H1 (cell line): ENCODE measurements at regions of chr22 and their contacts with region 1.

Region 1: GRCh38 chr22:19820628-19821522 is 33.8 kb downstream of the GNB1L start:
- DNase-seq: peak in 1 of 2 experiments; percentile 50
- H3K4me3 ChIP-seq: no peak overlapping the region
- H3K27ac ChIP-seq: no peak overlapping the region; the same call in 1 of the 2 replicates
- H3K4me1 ChIP-seq: peaks cover 0 to 10% (median 1%) of the 10 kb centered on the region in 4 experiments; a peak in 4 of 7 replicates
- H3K27me3 ChIP-seq: peaks cover 0 to 2% (median 0%) of the 10 kb centered on the region in 4 experiments; a peak in 1 of 7 replicates
- CTCF ChIP-seq: peak; percentile 47 to 59 (median 55)
- EP300 ChIP-seq: no peak
- POLR2A ChIP-seq: no peak
- RAD21 ChIP-seq: peak; percentile 43 to 53; a peak in 3 of 4 replicates

Region 2: DNA sequence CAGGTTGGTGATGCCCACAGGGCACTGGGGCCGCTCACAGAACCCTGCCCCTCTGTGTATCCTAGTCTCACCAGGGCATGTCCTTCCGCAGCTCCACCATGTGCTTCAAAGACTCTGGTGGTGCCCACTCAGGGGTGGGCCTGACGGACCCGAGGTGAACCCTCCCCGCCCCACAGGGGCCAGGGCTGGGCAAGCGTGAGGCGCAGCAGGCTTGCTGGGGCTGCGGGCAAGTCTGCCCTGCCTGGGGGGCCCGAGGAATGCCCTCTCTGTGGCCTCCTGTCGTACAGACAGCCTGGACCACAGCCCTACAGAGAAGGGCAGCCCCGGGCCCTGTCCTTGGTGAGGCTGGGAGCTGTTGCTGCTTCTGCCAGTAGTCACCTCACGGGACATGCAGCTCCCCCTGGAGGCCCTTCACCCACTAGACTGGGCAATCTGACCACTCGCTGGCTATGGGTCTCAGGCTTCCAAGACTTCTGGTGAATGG is 20.1 kb before region 1 on chr22:
- CTCF ChIA-PET with region 1: interaction called, 14 read pairs
- POLR2A ChIA-PET with region 1: no interaction called
- DNase-seq: no peak
- H3K4me3 ChIP-seq: no peak overlapping the region
- H3K27ac ChIP-seq: no peak overlapping the region
- H3K4me1 ChIP-seq: no peaks in the 10 kb centered on the region; a peak in 1 of 7 replicates
- H3K27me3 ChIP-seq: no peaks in the 10 kb centered on the region
- CTCF ChIP-seq: peak; percentile 46 to 72 (median 69)
- EP300 ChIP-seq: no peak
- POLR2A ChIP-seq: no peak
- RAD21 ChIP-seq: peak; percentile 42 to 51

Region 3: DNA sequence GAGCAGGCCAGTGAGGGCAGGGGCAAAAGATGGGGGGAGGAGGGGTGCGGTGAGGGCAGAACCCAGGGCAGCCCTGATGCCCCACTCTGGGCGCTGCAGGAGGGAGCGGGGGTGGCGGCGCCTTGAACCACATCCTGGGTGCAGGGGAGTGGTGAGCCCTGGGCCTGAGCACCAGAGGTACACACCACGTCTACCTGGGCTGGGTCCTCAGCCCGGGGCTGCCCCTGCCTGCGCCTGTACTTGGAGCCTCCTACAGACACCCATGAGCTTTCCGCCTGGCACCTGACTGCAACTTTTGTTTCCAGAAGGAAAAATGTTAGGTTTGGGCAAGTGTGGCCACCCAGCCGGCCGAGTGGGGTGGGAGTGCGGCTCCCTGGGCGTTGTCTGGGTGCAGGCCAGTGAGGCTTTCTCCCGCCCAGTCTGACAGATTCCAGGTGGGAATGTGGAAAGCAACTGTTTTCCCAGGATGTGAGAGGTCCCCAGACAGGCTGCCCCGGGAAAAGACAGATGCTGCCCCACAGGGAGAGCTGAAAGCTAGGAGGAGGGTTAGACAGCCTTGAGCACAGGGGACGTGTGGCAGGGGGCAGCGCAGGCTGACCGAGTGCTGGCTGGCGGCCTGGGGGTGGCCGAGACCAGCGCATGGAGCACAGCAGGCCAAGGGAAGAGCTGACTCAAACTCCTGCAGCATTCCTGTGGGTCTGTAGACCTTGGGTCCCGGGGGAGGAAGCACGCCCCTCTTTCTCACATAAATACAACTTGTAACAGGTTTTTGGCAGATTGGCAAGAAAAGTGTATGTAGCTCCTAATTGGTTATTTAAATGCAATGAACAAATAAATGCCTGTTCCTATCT is 10.3 kb before region 1 on chr22:
- CTCF ChIA-PET with region 1: interaction called, 14 read pairs
- POLR2A ChIA-PET with region 1: no interaction called
- DNase-seq: no peak
- H3K4me3 ChIP-seq: no peak overlapping the region
- H3K27ac ChIP-seq: no peak overlapping the region
- H3K4me1 ChIP-seq: no peaks in the 10 kb centered on the region; a peak in 1 of 7 replicates
- H3K27me3 ChIP-seq: no peaks in the 10 kb centered on the region
- CTCF ChIP-seq: no peak
- EP300 ChIP-seq: no peak
- POLR2A ChIP-seq: no peak
- RAD21 ChIP-seq: no peak; a peak in 2 of 4 replicates

Region 4: GRCh38 chr22:19832476-19833108 is 11.7 kb after region 1 on chr22:
- CTCF ChIA-PET with region 1: interaction called, 14 read pairs
- POLR2A ChIA-PET with region 1: interaction called, 5 read pairs
- DNase-seq: peak in 1 of 2 experiments; percentile 39
- H3K4me3 ChIP-seq: no peak overlapping the region
- H3K27ac ChIP-seq: no peak overlapping the region
- H3K4me1 ChIP-seq: no peaks in the 10 kb centered on the region
- H3K27me3 ChIP-seq: no peaks in the 10 kb centered on the region
- CTCF ChIP-seq: no peak
- EP300 ChIP-seq: no peak
- POLR2A ChIP-seq: no peak
- RAD21 ChIP-seq: no peak